ENCODE measurements at regions of chr10 and their contacts with region 1.

Region 1: DNA sequence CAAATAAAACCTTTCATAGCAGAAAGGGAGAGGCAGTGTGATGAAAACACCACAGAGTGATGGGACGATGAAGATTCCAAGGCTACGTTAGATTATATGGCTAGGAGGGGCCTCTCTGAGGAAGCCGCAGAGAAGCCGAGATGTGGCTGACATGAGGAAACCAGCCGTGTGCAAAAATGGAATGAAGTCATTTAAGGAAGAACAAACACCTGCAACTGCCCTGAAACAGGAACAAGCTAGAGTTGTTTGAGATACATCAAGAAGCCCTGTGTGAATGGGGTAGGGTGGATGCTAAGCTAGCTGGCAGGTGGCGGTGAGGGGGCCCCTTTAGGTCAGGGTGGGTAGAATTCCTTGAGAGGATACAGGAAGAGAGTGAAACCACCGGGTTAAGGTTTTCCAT is 129.5 kb downstream of the KLF6 start:
- DNase-seq: no peak
- H3K4me3 ChIP-seq: no peak overlapping the region
- H3K4me3 Mint-ChIP-seq: no peak overlapping the region
- H3K27ac Mint-ChIP-seq: peak overlapping the region; percentile 7
- H3K4me1 ChIP-seq: peaks cover 22% of the 10 kb centered on the region
- H3K4me1 Mint-ChIP-seq: peaks cover 32% of the 10 kb centered on the region
- H3K27me3 ChIP-seq: no peaks in the 10 kb centered on the region
- H3K27me3 Mint-ChIP-seq: no peaks in the 10 kb centered on the region
- CTCF ChIP-seq: no peak

Region 2: DNA sequence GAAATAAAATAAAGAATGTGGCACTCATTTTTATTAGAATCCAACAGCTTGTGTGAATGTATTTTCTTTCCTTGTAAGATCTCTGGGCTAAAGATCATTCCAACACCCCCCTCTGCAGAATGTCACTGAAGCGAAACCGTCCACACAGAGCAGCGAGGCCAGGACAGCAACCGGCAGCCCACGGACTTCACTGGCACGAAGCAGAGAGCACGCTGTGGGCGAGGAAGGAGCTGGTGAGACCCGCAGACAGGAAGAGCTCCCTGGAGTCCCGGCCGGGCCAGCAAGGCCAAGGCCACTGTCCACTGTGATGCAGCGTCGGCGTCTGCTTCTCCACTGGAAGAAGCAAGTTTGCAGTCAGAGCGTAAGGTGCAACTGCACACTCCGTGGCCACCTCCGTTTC is 70.1 kb before region 1 on chr10:
- CTCF ChIA-PET with region 1: no interaction called
- POLR2A ChIA-PET with region 1: no interaction called
- intact Hi-C with region 1: no loop called
- DNase-seq: no peak
- H3K4me3 ChIP-seq: no peak overlapping the region
- H3K4me3 Mint-ChIP-seq: no peak overlapping the region
- H3K27ac Mint-ChIP-seq: no peak overlapping the region
- H3K4me1 ChIP-seq: no peaks in the 10 kb centered on the region
- H3K4me1 Mint-ChIP-seq: no peaks in the 10 kb centered on the region
- H3K27me3 ChIP-seq: no peaks in the 10 kb centered on the region
- H3K27me3 Mint-ChIP-seq: no peaks in the 10 kb centered on the region
- CTCF ChIP-seq: no peak

Region 3: DNA sequence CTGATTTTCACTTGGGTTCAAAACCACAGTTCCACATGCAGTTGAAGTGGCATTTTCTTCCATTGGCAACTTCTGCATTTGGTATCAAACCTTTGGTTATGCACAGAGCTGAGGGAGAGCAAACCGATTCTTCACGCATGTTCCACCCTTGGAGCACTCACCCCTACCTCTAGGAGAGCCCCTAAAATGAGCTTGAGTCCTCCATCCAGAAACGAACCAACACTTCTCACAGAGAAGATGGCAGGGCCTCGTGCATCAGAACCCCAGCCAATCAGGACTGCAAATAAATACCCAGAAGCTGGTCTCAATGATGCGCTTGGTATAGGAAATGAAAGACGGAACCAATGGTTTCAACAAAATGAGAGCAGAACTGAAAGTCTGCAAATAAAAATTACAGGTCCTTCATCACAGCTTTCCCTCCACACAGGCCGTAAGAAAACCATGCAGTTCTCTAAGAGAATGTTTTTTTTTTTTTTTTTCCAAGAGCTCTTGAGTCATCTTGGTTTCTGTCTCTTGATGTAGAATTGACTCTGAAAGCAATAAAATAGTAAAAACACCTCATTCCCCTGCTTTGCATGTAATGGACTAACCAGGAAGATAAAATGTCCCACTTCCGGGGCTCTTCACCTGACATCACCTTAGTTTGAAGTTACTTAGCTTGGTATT is 105.6 kb after region 1 on chr10:
- CTCF ChIA-PET with region 1: no interaction called
- POLR2A ChIA-PET with region 1: no interaction called
- intact Hi-C with region 1: loop called (anchors 5 kb)
- DNase-seq: no peak
- H3K4me3 ChIP-seq: no peak overlapping the region
- H3K4me3 Mint-ChIP-seq: peak overlapping the region; percentile 86
- H3K27ac Mint-ChIP-seq: peak overlapping the region; percentile 78
- H3K4me1 ChIP-seq: peaks cover 94% of the 10 kb centered on the region
- H3K4me1 Mint-ChIP-seq: peaks cover 80% of the 10 kb centered on the region
- H3K27me3 ChIP-seq: no peaks in the 10 kb centered on the region
- H3K27me3 Mint-ChIP-seq: no peaks in the 10 kb centered on the region
- CTCF ChIP-seq: no peak

Region 4: DNA sequence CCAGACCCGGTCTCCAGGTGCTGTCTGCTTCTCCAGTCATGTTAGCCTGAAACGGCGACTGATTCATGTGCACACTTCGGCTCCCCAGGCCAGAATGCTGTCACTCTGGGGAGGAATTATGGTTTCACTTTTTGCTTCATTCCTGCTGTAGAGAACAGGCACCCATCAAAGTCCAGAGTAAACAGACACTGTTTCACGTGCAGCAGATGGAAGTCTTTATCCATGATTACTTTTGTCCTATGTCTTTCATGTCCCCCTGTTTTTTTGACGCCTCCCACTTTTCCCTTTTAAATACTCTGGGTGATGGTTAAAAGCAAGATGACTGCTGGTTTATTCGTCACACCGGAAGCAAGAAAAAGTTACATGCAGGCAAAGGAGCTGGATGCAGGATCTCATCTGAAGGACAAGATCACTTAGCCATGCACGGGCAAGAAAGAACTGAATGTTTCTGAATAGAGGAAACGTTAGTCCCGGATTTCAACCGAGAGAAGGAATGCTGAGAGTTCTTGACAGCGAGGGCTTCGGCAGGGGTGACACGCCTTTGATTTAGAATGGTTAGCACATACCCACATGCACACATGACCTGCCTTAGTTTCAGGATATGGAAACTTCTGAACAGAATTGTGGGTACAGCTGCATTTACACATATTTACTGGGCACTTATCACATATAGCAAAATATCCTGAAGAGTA is 379.5 kb after region 1 on chr10:
- CTCF ChIA-PET with region 1: no interaction called
- POLR2A ChIA-PET with region 1: no interaction called
- intact Hi-C with region 1: no loop called
- DNase-seq: no peak
- H3K4me3 ChIP-seq: no peak overlapping the region
- H3K4me3 Mint-ChIP-seq: peak overlapping the region; percentile 63
- H3K27ac Mint-ChIP-seq: peak overlapping the region; percentile 11
- H3K4me1 ChIP-seq: peaks cover 9% of the 10 kb centered on the region; the same call in 1 of the 2 replicates
- H3K4me1 Mint-ChIP-seq: peaks cover 10% of the 10 kb centered on the region
- H3K27me3 ChIP-seq: no peaks in the 10 kb centered on the region
- H3K27me3 Mint-ChIP-seq: no peaks in the 10 kb centered on the region
- CTCF ChIP-seq: no peak